ENCODE measurements at regions of chr1 and their contacts with region 1.

Region 1: GRCh38 chr1:31422505-31423319 is 9.7 kb downstream of the SERINC2 start:
- DNase-seq: peak; percentile 67
- H3K4me3 ChIP-seq: no peak overlapping the region
- H3K27ac ChIP-seq: peak overlapping the region; percentile 5
- H3K4me1 ChIP-seq: peaks cover 4% of the 10 kb centered on the region
- H3K27me3 ChIP-seq: no peaks in the 10 kb centered on the region
- CTCF ChIP-seq: peak; percentile 95
- POLR2A ChIP-seq: no peak

Region 2: DNA sequence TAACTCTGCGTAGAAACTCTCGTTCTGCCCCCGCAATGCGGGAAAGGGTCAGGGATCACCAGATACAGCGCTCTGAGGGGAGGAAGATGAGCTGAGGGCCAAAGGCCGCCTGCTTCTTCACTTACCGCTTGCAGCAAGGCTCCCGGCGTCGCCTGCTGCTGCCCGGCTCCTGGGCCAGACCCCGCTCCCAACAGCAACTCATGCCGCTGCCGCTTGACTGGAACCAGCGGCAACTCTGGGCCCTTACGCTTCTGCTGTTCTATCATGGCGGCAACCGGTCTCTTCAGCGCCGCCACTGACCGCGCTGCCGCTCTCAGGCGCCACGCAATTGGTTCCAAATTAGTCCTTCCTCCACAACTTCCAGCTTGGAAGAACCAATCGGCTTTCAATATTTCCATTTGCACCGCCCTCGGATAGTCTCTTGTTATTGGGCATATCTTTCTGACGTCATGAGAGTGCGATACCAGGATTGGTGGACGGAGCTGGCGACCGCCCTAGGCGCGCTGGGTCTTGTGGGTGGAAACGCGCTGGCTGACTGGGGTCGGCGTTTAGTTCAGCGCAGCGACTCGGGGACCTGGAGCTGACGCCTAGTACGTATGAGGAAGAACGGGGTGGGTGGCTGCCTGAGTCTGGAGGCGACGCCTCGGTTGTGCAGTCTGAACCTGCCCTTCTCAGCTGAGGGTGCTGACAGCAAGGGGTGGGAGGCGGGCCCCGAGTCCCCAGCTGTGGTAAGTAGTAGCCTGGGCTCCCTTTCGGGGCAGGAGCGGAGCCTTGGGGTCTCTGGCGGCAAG is 126.0 kb before region 1 on chr1 and contains the starts of genes SNRNP40 and ZCCHC17:
- CTCF ChIA-PET with region 1: interaction called, 5 read pairs
- POLR2A ChIA-PET with region 1: interaction called, 4 read pairs
- dilution Hi-C with region 1: no loop called
- intact Hi-C with region 1: loop called (anchors 1 kb)
- DNase-seq: peak; percentile 100
- H3K4me3 ChIP-seq: peak within 1 kb of the TSS; percentile 98 to 100 (median 98)
- H3K27ac ChIP-seq: peak within 1 kb of the TSS; percentile 81
- H3K4me1 ChIP-seq: peaks cover 20% of the 10 kb centered on the region
- H3K27me3 ChIP-seq: no peaks in the 10 kb centered on the region
- CTCF ChIP-seq: peak in 1 of 2 donors; percentile 13
- POLR2A ChIP-seq: peak; percentile 96
- total RNA-seq, gene SNRNP40: 78.1 and 85.3 TPM in 2 replicates
- total RNA-seq, gene ZCCHC17: 40.4 and 41.4 TPM in 2 replicates

Region 3: GRCh38 chr1:31372961-31373896 is 49.5 kb before region 1 on chr1 and contains the start of gene FABP3:
- CTCF ChIA-PET with region 1: interaction called, 15 read pairs
- POLR2A ChIA-PET with region 1: no interaction called
- dilution Hi-C with region 1: no loop called
- intact Hi-C with region 1: loop called (anchors 1 kb)
- DNase-seq: peak; percentile 52
- H3K4me3 ChIP-seq: peak within 1 kb of the TSS; percentile 17 to 43 (median 35)
- H3K27ac ChIP-seq: no peak within 1 kb of the TSS
- H3K4me1 ChIP-seq: peaks cover 6% of the 10 kb centered on the region
- H3K27me3 ChIP-seq: no peaks in the 10 kb centered on the region
- CTCF ChIP-seq: no peak
- POLR2A ChIP-seq: no peak
- total RNA-seq, gene FABP3: 0.84 and 1.8 TPM in 2 replicates

Region 4: GRCh38 chr1:31394628-31395193 is 28.0 kb before region 1 on chr1:
- CTCF ChIA-PET with region 1: interaction called, 236 read pairs
- POLR2A ChIA-PET with region 1: no interaction called
- dilution Hi-C with region 1: no loop called
- intact Hi-C with region 1: loop called (anchors 1 kb)
- DNase-seq: peak; percentile 71
- H3K4me3 ChIP-seq: no peak overlapping the region
- H3K27ac ChIP-seq: no peak overlapping the region
- H3K4me1 ChIP-seq: peaks cover 5% of the 10 kb centered on the region
- H3K27me3 ChIP-seq: no peaks in the 10 kb centered on the region
- CTCF ChIP-seq: peak; percentile 90 to 96
- POLR2A ChIP-seq: no peak

Measured in endothelial cell of umbilical vein (primary cell).